Aorta (tissue), 5 donors: ENCODE measurements at regions of chr13 and their contacts with region 1.

Region 1: DNA sequence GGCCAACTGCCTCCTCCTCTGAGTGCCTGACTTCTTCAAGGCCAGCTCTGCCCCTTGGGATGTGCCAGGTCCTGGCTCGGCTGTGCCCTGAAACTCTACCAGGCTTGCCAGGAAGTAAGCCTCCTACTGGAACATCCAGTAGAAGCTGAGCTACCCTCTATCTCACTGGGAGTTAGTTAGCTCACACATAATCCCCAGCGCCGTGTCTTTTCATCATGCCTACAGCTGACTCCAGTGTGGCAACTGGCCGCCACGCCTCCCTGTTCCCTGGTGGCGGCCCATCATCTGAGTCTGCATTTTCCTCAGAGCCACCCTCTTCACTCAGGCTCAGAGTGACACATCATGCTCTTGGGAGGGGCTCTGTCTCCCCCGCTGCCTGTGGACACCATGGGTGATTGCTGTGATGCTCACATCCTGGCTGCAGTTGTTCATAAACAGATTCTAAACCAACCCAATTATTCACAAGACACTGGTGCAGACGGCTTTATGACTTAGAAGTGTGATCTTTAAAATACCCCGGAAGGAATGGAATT is 131.9 kb upstream of the IRS2 start:
- DNase-seq: peak in 1 of 2 donors; percentile 52
- ATAC-seq: peak; percentile 62
- H3K4me3 ChIP-seq: no peak overlapping the region
- H3K27ac ChIP-seq: peak overlapping the region in 1 of 2 donors; percentile 1
- H3K4me1 ChIP-seq: peaks cover 0 to 2% of the 10 kb centered on the region in 2 donors
- H3K27me3 ChIP-seq: no peaks in the 10 kb centered on the region

Region 2: DNA sequence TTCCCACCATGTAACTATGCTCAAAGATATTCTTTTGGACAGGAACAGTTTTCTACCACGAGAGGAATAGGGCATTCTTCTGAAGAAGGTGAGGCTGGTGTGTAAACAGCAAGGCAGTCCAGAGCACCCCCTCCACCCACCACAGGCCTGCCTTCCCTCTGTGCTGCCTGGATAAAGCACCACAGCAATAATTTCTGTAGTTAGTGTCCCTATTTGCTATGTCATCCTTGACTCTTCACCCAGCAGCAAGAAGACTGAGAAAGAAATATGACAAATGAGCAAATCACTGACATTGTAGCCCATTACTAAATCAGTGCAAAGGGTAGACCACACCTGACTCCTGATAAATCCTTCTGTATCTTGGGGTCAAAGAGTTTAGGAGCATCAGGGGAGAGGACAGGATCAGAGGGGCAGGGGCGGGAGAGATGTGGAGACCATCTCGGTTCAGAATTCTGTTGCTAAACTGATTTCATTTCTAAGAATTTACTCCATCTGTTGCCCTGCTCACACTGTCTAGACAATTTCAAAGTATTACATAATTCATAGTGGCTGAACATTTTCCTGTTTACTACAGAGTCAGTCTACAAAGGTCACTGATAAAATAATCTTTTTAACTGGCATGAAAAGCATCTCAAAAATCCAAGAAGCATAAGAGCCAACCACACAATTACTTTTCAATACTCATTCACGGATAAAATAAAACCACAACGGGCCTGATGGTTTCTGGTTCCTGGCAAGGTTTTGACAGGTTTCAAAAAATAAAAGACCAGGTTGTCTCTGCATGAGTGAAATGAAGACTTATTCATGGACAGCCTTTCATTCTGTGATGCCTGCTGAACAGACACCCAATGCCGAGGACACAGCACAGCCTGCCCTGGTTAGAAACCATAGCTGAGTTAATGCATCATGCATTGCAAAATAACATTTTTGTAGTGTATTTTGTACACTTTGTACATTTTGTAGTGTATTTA is 43.5 kb before region 1 on chr13:
- intact Hi-C with region 1: loop called in 1 of 2 experiments (anchors 5 kb)
- DNase-seq: no peak
- ATAC-seq: peak; percentile 54
- H3K4me3 ChIP-seq: no peak overlapping the region
- H3K27ac ChIP-seq: peak overlapping the region; percentile 91 to 96
- H3K4me1 ChIP-seq: peaks cover 0 to 7% of the 10 kb centered on the region in 2 donors
- H3K27me3 ChIP-seq: no peaks in the 10 kb centered on the region

Region 3: DNA sequence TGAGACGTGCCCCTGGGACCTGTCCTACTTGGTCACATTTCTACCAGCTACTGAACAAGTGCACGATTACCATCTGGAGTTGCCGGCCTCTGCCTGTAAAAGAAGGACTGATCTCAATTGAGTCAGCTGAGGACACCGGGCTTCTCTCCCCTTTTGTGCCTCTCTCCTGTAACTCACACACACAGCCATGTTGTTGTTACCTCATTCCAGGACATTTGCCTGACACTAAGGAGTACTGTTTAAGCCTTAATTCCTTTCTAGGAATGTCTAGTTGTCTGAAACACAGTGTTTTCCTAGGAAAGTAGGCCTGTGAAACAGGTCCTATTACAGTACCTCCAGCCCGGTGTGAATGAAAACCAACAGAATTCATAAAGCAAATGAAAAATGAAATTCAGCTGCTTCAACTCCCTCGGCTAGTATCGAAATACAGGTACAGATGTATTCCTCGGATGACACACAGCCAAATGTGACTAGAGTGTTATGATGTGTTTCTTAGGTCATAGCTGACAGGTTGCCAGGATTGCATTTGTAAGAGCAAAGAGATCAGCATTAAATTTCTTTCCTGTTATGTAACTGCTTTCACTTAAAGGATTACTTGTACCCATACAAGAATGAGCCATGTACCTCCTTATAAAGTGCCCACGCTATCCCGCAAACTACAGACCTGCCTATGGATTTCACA is 20.2 kb after region 1 on chr13:
- intact Hi-C with region 1: no loop called
- DNase-seq: no peak
- ATAC-seq: no peak
- H3K4me3 ChIP-seq: no peak overlapping the region
- H3K27ac ChIP-seq: no peak overlapping the region
- H3K4me1 ChIP-seq: peaks cover 0 to 2% of the 10 kb centered on the region in 2 donors
- H3K27me3 ChIP-seq: no peaks in the 10 kb centered on the region